ENCODE measurements at regions of chr11 and their contacts with region 1.

Region 1: DNA sequence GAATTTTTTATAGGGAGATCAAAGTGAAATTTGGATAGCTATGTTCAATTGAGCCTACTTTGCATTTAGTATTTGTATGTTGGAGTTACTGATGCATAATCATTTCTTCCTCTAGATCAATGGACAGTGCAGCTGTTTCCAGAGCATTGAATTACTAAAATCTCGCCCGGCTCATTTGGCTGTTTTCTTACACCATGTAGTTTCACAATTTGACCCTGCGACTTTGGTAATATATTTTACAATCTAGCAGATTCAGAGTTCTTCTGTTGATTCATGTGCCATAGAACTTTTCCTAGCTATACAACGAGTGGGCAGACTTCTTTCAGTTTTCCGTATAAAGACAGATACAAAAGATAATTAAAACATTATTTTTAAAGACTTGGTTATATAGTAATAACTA is 70.0 kb upstream of the GRIK4 start:
- DNase-seq: no peak
- ATAC-seq: no peak
- H3K4me3 ChIP-seq: no peak overlapping the region
- H3K27ac ChIP-seq: no peak overlapping the region
- H3K4me1 ChIP-seq: no peaks in the 10 kb centered on the region
- H3K27me3 ChIP-seq: no peaks in the 10 kb centered on the region
- CTCF ChIP-seq: no peak

Region 2: DNA sequence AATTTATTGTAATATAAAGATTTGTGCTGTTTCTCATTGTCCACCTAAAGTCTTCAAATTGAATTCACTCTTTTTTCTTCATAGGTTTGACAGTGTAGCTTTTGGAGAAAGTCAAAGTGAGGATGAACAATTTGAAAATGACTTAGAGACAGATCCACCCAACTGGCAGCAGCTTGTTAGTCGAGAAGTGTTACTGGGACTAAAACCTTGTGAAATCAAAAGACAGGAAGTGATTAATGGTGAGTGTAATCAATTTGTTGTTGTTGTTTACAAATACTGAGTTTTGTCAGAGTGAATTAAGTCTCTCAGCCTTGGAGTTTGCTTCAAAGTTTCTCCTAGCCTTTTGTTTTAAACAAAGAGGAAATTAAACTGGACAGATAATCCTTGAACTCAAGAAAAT is 16.4 kb after region 1 on chr11:
- intact Hi-C with region 1: loop called in 1 of 2 experiments (anchors 2 kb)
- DNase-seq: no peak
- ATAC-seq: no peak
- H3K4me3 ChIP-seq: no peak overlapping the region
- H3K27ac ChIP-seq: no peak overlapping the region
- H3K4me1 ChIP-seq: no peaks in the 10 kb centered on the region
- H3K27me3 ChIP-seq: no peaks in the 10 kb centered on the region
- CTCF ChIP-seq: no peak

Region 3: GRCh38 chr11:120471131-120471530 is 29.5 kb after region 1 on chr11:
- intact Hi-C with region 1: loop called in 1 of 2 experiments (anchors 5 kb)
- DNase-seq: no peak
- ATAC-seq: no peak
- H3K4me3 ChIP-seq: no peak overlapping the region
- H3K27ac ChIP-seq: no peak overlapping the region
- H3K4me1 ChIP-seq: no peaks in the 10 kb centered on the region
- H3K27me3 ChIP-seq: no peaks in the 10 kb centered on the region
- CTCF ChIP-seq: no peak

Measured in psoas muscle (tissue), 8 donors.